Caco-2 (cell line): ENCODE measurements at regions of chr9 and their contacts with region 1.

Region 1: DNA sequence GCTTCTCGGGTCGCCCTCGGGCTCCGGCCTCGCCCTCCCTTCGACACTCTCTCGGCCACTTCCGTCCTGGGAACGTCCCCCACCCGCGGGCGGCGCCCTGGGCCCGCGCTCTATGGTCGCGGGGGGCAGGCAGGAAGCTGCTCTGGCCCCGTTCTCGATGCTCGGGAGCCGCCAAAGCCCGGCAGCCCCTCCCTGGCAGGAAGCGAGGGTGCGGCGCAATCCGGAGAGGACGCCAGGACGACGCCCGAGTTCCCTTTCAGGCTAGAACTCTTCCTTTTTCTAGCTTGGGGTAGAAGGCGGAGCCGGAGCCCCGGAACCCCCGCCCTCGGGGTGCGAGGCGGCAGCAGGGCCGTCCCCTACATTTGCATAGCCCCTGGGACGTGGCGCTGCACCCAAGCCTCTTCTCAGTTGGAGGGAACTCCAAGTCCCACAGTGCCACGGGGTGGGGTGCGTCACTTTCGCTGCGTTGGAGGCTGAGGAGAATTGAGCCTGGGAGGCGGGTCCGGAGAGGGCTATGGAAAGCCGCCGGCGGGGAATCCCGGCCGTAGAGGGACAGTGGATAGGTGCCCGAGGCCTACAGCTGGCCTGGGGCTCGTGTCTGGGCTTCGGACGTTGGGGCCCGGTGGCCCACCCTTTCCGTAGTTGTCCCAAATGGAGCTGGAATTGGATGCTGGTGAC is at the starts of genes CREB3 and TLN1:
- DNase-seq: peak; percentile 98 to 99
- H3K4me3 ChIP-seq: peak within 1 kb of the TSS; percentile 83
- H3K4me3 Mint-ChIP-seq: no peak within 1 kb of the TSS
- H3K27ac Mint-ChIP-seq: no peak within 1 kb of the TSS
- H3K4me1 ChIP-seq: peaks cover 39% of the 10 kb centered on the region
- H3K4me1 Mint-ChIP-seq: no peaks in the 10 kb centered on the region
- H3K27me3 ChIP-seq: no peaks in the 10 kb centered on the region
- H3K27me3 Mint-ChIP-seq: no peaks in the 10 kb centered on the region
- CTCF ChIP-seq: peak in 1 of 2 experiments; percentile 12
- total RNA-seq, gene CREB3: 50.4 and 54.1 TPM in 2 replicates
- total RNA-seq, gene TLN1: 147 and 165 TPM in 2 replicates

Region 2: GRCh38 chr9:35489313-35490154 is 242.7 kb before region 1 on chr9 and contains the start of gene RUSC2:
- CTCF ChIA-PET with region 1: no interaction called
- POLR2A ChIA-PET with region 1: no interaction called
- intact Hi-C with region 1: loop called (anchors 10 kb)
- DNase-seq: peak; percentile 91 to 94
- H3K4me3 ChIP-seq: peak within 1 kb of the TSS; percentile 52
- H3K4me3 Mint-ChIP-seq: peak within 1 kb of the TSS; percentile 97
- H3K27ac Mint-ChIP-seq: peak within 1 kb of the TSS; percentile 93
- H3K4me1 ChIP-seq: peaks cover 18% of the 10 kb centered on the region
- H3K4me1 Mint-ChIP-seq: peaks cover 26% of the 10 kb centered on the region
- H3K27me3 ChIP-seq: no peaks in the 10 kb centered on the region
- H3K27me3 Mint-ChIP-seq: no peaks in the 10 kb centered on the region
- CTCF ChIP-seq: peak; percentile 39 to 62
- total RNA-seq, gene RUSC2: 13.0 and 13.5 TPM in 2 replicates

Region 3: GRCh38 chr9:35646533-35647265 is 85.6 kb before region 1 on chr9:
- CTCF ChIA-PET with region 1: interaction called, 8 read pairs
- POLR2A ChIA-PET with region 1: interaction called, 16 read pairs
- intact Hi-C with region 1: loop called (anchors 1 kb)
- DNase-seq: peak; percentile 90 to 97
- H3K4me3 ChIP-seq: peak overlapping the region; percentile 46
- H3K4me3 Mint-ChIP-seq: peak overlapping the region; percentile 81
- H3K27ac Mint-ChIP-seq: peak overlapping the region; percentile 84
- H3K4me1 ChIP-seq: no peaks in the 10 kb centered on the region; the same call in 1 of the 2 replicates
- H3K4me1 Mint-ChIP-seq: peaks cover 10% of the 10 kb centered on the region
- H3K27me3 ChIP-seq: no peaks in the 10 kb centered on the region
- H3K27me3 Mint-ChIP-seq: no peaks in the 10 kb centered on the region
- CTCF ChIP-seq: peak; percentile 93 to 94

Region 4: GRCh38 chr9:35664531-35665470 is 67.5 kb before region 1 on chr9 and contains the start of gene ARHGEF39:
- CTCF ChIA-PET with region 1: interaction called, 19 read pairs
- POLR2A ChIA-PET with region 1: interaction called, 19 read pairs
- intact Hi-C with region 1: loop called (anchors 1 kb)
- DNase-seq: peak; percentile 86 to 92
- H3K4me3 ChIP-seq: peak within 1 kb of the TSS; percentile 73
- H3K4me3 Mint-ChIP-seq: peak within 1 kb of the TSS; percentile 83
- H3K27ac Mint-ChIP-seq: peak within 1 kb of the TSS; percentile 89
- H3K4me1 ChIP-seq: peaks cover 27% of the 10 kb centered on the region
- H3K4me1 Mint-ChIP-seq: peaks cover 29% of the 10 kb centered on the region
- H3K27me3 ChIP-seq: no peaks in the 10 kb centered on the region
- H3K27me3 Mint-ChIP-seq: no peaks in the 10 kb centered on the region
- CTCF ChIP-seq: peak in 1 of 2 experiments; percentile 57
- total RNA-seq, gene ARHGEF39: 31.4 and 32.8 TPM in 2 replicates

Region 5: DNA sequence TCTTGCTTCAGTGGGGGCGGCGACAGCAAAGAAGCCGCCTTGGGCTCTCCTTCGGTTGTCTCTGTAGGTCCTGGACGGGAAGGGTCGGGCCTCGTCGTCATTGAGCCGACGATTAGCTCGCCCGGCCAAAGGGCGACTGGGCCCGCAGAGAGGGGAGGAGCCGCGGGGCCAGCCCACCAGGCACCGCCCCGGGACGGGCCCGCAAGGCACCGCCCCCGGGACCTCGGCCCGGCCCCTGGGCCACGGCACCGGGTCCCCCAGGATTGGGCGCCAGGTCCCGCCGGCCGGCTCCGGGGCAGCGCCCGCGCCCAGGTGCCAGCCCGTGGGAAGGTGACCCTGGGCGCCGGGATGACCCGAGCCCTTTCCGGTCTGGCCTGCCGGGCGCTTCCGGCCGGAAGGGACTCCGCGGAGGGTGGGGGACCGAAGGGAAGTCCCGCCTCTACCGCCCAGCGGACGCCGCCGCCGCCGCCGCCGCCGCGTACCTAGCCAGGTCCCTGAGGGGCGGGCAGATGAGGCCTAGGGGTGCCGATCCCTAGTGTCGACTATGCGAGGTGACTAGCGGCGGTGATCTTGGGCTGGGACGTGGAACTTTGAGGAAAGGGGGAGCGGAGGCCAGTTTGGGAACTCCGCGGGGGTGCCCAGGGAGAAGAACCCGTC is 16.7 kb after region 1 on chr9 and contains the starts of genes GBA2 and RGP1:
- CTCF ChIA-PET with region 1: interaction called, 21 read pairs
- POLR2A ChIA-PET with region 1: interaction called, 41 read pairs
- intact Hi-C with region 1: loop called (anchors 1 kb)
- DNase-seq: peak; percentile 89 to 90
- H3K4me3 ChIP-seq: peak within 1 kb of the TSS; percentile 89
- H3K4me3 Mint-ChIP-seq: peak within 1 kb of the TSS; percentile 86
- H3K27ac Mint-ChIP-seq: peak within 1 kb of the TSS; percentile 85
- H3K4me1 ChIP-seq: peaks cover 23% of the 10 kb centered on the region
- H3K4me1 Mint-ChIP-seq: peaks cover 22% of the 10 kb centered on the region
- H3K27me3 ChIP-seq: no peaks in the 10 kb centered on the region
- H3K27me3 Mint-ChIP-seq: no peaks in the 10 kb centered on the region
- CTCF ChIP-seq: no peak
- total RNA-seq, gene GBA2: 108 and 111 TPM in 2 replicates
- total RNA-seq, gene RGP1: 25.0 and 27.1 TPM in 2 replicates

Region 6: GRCh38 chr9:35790385-35791296 is 58.4 kb after region 1 on chr9:
- CTCF ChIA-PET with region 1: interaction called, 4 read pairs
- POLR2A ChIA-PET with region 1: no interaction called
- intact Hi-C with region 1: loop called (anchors 1 kb)
- DNase-seq: peak; percentile 75 to 77
- H3K4me3 ChIP-seq: no peak overlapping the region
- H3K4me3 Mint-ChIP-seq: no peak overlapping the region
- H3K27ac Mint-ChIP-seq: no peak overlapping the region
- H3K4me1 ChIP-seq: peaks cover 8% of the 10 kb centered on the region; the same call in 1 of the 2 replicates
- H3K4me1 Mint-ChIP-seq: peaks cover 4% of the 10 kb centered on the region
- H3K27me3 ChIP-seq: no peaks in the 10 kb centered on the region
- H3K27me3 Mint-ChIP-seq: no peaks in the 10 kb centered on the region
- CTCF ChIP-seq: peak; percentile 80 to 81